Posterior cingulate gyrus (tissue), 11 donors: ENCODE measurements at regions of chr1 and their contacts with region 1.

Region 1: GRCh38 chr1:165257969-165258459 is 98.5 kb downstream of the LMX1A start:
- DNase-seq: peak in 5 of 10 donors; percentile 13 to 60 (median 30)

Region 2: DNA sequence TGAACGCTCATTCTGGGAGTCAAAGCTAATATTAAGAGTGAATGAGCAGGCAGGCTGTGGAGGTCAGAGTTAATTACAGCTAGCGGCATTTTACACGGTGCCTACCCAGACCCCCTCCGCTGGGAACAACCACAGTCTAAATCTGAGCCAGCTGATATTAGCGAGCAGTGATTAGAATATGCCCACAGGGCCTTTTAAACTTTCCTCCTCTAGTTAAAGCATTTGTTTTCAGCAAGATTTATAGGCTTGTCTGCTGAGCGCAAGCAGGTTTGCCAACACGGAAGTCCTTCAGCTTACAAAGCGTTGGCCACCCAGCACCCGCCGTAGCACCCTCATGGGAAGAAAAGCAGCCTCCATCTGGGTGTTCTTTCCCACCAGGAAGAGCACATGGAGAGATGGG is 26.4 kb after region 1 on chr1:
- intact Hi-C with region 1: no loop called
- DNase-seq: no peak

Region 3: DNA sequence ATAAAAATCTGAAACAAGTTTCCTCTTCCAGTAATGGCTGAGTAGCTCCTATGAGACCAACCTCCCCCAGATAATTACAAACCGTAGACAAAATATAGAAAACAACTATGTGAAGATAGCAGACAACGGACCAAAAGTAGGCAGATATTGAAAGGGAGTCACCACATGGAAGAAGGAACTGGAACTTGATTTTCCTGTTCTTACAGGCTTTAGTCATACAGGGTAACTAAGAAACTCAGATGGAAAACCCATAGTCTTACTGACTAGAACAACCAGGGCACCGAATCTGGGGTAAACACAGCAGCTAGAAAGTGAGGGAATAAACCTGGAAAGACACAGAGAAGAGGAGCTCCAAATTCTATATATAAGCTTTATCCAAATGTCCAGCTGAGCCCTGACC is 72.5 kb after region 1 on chr1:
- intact Hi-C with region 1: no loop called
- DNase-seq: no peak

Region 4: GRCh38 chr1:165367375-165367993 is 109.5 kb after region 1 on chr1:
- intact Hi-C with region 1: loop called (anchors 10 kb)
- DNase-seq: peak in 7 of 10 donors; percentile 69 to 92 (median 81)